Head of caudate nucleus (tissue), 42 donors: ENCODE measurements at regions of chr10 and their contacts with region 1.

Region 1: DNA sequence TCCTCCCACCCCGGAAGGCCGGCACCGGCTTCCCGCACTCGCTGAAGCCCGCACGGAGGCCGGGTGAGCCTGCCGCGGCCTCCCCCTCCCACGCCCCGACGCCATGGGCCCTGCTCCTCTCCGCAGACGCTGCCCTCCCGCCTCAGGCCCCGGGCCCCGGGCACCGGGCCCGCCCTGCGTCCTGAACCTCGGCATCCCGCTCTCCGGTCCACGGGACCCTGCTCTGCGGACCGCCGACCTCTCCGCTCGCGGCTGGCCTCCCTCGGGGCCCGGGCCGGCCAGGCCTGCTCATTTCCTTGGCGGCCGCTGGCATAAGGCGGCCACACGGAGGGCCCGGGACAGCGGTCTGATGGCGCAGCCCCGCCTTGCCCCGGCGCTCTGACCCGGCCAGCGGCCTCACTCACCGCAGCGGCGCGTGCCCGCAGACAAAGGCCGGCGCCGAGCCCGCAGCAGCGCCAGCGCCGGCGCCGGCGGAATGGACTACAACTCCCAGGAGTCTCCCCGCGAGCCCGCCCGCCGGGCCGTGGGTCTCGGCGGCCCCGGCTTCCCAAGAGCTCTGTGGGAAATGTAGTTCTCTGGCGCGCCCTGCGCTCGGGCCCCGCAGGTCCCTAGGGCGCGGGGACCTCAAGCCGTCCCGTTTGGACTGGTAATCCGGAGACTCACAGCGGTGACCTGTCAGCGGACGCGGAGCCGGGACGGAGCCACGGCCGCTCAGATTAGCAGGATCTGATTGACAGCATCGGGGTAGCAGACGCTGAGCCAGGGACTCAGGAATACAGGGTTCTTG is at the start of gene ZNF32:
- DNase-seq: peak; percentile 64 to 96 (median 91)

Region 2: DNA sequence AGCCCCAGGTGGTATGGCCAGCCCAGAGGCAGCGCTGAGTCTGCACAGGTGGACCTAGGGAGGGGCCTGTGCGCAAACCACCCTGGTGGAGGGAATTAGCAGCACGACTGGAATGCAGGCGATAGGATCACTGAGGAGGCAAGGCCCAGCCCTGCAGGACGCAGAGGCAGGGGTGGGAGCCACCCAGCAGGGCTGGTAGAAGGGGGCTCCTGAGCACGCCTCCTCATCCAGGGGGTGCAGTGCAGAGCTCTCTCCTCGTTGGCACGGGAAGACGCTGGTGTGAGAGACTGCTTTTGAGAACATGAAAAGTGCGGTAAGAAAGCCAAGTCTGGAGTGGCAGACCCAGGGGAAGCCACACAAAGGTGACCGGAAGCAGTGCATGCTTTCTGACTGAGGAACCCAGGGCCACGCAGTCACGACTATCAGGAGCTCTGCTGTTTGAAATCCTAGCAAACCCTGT is 271.1 kb before region 1 on chr10:
- intact Hi-C with region 1: no loop called
- DNase-seq: peak in 3 of 42 donors; percentile 1 to 16 (median 16)

Region 3: GRCh38 chr10:43407576-43408330 is 240.8 kb before region 1 on chr10:
- intact Hi-C with region 1: loop called (anchors 5 kb)
- DNase-seq: peak; percentile 71 to 96 (median 87)

Region 4: DNA sequence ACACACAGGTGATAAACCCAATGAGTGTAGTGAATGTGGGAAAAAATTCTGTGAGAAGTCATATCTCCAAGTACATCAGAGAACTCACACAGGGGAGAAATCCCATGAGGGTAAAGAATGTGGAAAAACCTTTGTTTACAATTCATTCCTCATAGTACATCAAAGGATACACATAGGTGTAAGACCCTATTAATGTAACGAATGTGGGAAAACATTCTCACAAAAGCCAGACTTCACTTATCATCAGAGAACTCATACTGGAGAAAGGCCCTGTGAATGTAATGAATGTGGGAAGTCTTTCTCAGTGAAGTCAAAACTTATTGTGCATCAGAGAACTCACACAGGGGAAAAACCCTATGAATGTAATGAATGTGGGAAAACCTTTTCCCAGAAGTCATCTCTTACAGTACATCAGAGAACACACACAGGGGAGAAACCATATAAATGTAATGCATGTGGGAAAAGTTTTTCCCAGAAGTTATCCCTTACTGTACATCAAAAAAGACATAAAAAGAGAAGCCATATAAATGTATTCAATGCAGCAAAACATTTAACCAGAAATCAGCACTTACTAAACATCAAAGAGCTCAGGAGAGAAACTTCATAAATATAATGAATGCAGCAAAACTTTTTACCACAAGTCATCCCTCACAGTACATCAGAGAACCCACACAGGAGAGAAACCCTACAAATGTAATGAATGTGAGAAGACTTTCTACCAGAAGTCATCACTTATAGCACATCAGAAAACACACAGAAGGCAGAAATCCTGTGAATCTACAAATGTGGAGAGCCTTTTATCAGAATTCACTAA is 124.0 kb before region 1 on chr10:
- intact Hi-C with region 1: no loop called
- DNase-seq: no peak

Region 5: DNA sequence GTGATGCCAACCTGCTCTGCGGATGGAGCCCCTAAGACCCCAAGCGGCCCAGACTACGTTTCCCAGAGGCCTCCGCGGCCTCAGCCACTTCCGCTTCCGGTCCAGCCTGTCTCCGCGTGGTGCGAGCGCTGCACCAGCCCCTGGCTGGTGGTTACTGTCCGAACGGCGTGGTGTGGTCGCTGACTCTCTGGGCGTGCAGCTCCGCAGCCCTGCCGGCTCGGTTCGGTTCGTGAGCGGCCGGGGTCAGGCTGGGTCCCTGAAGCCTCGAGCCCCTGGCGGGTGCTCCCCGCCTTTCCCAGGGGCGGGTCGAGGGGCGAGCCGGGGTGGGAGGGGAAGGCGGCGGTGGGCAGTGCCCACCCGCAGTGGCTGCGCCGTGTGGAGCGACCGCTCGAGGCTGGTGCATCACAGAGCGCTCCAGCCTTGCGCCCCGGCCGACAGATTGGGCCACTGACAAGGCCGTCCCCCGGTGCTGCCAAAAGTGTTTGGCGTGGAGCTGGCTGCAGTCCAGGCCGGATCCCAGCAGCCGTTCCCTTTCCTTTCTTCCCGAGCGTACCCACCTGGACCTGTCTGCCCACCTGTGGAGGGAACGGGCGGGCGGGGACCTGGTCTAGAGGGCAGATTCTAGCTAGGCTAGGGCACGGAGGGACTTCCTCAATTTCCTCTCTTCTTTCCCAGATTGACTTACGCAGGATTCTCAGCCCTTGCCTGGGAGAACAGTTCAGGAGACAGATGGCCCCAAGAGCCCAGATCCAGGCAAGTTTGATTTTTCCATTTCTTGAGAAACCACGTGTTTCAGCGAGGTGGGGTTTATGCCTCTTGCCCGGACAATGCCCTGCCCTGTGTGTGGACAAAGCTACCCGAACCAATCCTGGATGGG is 42.0 kb before region 1 on chr10 and contains the start of gene ZNF485:
- intact Hi-C with region 1: loop called (anchors 2 kb)
- DNase-seq: peak; percentile 50 to 92 (median 84)